ENCODE measurements at regions of chr6 and their contacts with region 1.

Region 1: GRCh38 chr6:169789982-169790927 is 38.8 kb downstream of the ERMARD start:
- DNase-seq: peak; percentile 75
- ATAC-seq: peak; percentile 97
- H3K4me3 Mint-ChIP-seq: peak overlapping the region; percentile 70
- H3K27ac Mint-ChIP-seq: no peak overlapping the region
- H3K4me1 Mint-ChIP-seq: peaks cover 11% of the 10 kb centered on the region
- H3K27me3 Mint-ChIP-seq: peaks cover 41% of the 10 kb centered on the region
- CTCF ChIP-seq: peak; percentile 97

Region 2: DNA sequence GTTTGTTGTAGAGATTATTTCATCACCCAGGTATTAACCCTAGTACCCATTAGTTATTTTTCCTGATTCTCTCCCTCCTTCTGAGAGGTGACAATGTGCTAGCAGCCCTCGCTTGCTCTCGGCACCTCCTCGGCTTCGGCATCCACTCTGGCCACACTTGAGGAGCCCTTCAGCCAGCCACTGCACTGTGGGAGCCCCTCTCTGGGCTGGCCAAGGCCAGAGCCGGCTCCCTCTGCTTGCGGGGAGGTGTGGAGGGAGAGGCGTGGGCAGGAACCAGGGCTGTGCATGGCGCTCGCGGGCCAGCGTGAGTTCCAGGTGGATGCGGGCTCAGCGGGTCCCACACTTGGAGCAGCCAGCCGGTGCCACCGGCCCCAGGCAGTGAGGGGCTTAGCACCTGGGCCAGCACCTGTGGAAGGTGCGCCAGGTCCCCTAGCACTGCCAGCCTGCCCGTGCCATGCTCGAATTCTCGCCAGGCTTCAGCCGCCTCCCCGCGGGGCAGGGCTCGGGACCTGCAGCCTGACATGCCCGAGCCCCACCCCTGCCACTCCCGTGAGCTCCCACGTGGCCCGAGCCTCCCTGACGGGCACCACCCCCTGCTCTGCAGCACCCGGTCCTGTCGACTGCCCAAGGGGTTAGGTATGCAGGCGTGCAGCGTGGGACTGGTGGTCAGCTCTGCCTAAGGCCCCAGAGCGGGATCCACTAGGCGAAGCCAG is 310.3 kb before region 1 on chr6:
- CTCF ChIA-PET with region 1: no interaction called
- POLR2A ChIA-PET with region 1: no interaction called
- intact Hi-C with region 1: no loop called
- DNase-seq: no peak
- ATAC-seq: no peak
- H3K4me3 Mint-ChIP-seq: no peak overlapping the region
- H3K27ac Mint-ChIP-seq: no peak overlapping the region
- H3K4me1 Mint-ChIP-seq: no peaks in the 10 kb centered on the region
- H3K27me3 Mint-ChIP-seq: no peaks in the 10 kb centered on the region
- CTCF ChIP-seq: no peak

Region 3: DNA sequence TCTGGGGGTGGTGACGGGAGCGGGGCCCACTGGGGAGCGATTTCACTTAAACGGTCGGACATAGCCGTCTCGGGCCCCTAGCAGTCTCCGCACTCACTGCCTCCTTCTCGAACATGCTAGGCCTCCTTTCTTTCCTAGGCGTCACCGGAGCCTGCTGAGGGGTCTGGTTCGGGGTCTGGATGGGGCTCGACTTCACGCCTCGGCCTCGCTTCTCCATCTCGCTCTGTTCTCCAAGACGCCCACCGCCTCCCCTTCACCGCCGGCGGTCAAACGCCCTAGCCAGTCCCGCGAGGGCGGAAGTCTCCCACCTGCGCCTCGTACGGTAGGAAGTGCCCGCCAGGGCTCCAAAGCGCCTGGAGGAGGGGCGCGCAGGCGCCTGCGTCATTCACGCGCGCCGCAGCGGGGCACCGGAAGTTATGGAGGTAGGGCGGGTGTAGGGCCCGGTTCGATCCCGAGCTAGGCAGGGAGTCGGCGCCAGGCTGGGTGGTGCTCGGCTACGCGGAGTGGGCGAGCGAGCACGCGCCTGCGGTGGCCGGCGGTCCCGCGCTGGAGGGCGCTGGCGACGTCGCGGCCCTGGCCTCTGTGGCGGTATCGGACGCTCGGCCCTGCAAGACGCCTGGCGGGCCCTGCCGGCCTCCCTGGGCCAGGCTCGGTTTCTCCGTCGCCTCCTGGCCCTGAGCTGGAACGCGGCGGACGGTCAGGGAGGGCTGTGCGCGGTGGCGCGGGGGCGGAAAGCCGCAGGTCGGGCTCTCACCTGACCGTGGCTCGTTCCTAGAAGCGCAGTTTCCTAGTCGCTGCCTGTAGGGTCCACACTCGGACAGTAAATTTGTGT is 38.8 kb before region 1 on chr6 and contains the starts of genes DYNLT2 and ERMARD:
- CTCF ChIA-PET with region 1: interaction called, 11 read pairs
- POLR2A ChIA-PET with region 1: no interaction called
- intact Hi-C with region 1: no loop called
- DNase-seq: peak; percentile 94
- ATAC-seq: peak; percentile 97
- H3K4me3 Mint-ChIP-seq: peak within 1 kb of the TSS; percentile 100
- H3K27ac Mint-ChIP-seq: peak within 1 kb of the TSS; percentile 100
- H3K4me1 Mint-ChIP-seq: peaks cover 28% of the 10 kb centered on the region
- H3K27me3 Mint-ChIP-seq: no peaks in the 10 kb centered on the region
- CTCF ChIP-seq: no peak
- total RNA-seq, gene DYNLT2: 2.2 to 2.4 TPM
- total RNA-seq, gene ERMARD: 24.9 to 26.6 TPM

Region 4: GRCh38 chr6:169778646-169779045 is 11.6 kb before region 1 on chr6:
- CTCF ChIA-PET with region 1: interaction called, 14 read pairs
- POLR2A ChIA-PET with region 1: interaction called, 3 read pairs
- intact Hi-C with region 1: no loop called
- DNase-seq: no peak
- ATAC-seq: no peak
- H3K4me3 Mint-ChIP-seq: no peak overlapping the region
- H3K27ac Mint-ChIP-seq: no peak overlapping the region
- H3K4me1 Mint-ChIP-seq: no peaks in the 10 kb centered on the region
- H3K27me3 Mint-ChIP-seq: no peaks in the 10 kb centered on the region
- CTCF ChIP-seq: no peak

Region 5: DNA sequence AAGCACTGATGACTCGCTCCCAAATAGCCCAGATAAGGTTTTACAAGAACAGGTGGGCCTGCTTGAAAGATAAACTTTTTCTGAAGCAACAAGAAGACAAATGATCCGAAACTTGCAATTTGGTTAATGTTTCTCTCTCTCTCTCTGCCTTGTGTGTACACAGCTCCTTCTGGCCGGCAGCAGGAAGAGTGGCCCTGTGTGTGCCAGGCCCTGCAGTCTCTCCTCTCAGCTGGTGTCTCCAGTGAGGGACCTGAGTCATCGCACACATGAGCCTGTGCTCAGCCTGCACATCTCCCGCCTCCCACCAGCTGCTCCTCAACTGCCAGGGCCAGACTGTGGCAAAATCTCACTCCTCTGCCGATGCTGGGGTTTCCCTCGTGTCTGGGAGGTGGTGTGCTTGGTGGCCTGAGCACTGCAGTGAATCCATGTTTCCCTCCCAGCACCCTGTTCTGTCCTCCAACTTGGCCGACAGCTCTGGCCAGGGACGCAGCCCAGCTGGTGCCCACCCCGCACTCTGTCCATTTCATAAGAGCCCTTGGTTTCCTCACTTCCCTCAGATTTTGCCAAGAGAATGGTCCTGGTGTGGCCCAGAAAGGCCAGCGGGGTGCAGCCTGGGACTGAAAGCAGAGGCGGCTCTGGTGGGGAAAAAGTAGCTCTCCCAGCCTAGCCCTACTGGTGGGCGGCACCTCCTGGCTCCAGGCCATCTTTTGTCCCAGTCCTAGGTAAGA is 10.6 kb after region 1 on chr6:
- CTCF ChIA-PET with region 1: interaction called, 65 read pairs
- POLR2A ChIA-PET with region 1: interaction called, 4 read pairs
- intact Hi-C with region 1: no loop called
- DNase-seq: no peak
- ATAC-seq: peak; percentile 45
- H3K4me3 Mint-ChIP-seq: no peak overlapping the region
- H3K27ac Mint-ChIP-seq: no peak overlapping the region
- H3K4me1 Mint-ChIP-seq: peaks cover 35% of the 10 kb centered on the region
- H3K27me3 Mint-ChIP-seq: peaks cover 42% of the 10 kb centered on the region
- CTCF ChIP-seq: no peak

Region 6: DNA sequence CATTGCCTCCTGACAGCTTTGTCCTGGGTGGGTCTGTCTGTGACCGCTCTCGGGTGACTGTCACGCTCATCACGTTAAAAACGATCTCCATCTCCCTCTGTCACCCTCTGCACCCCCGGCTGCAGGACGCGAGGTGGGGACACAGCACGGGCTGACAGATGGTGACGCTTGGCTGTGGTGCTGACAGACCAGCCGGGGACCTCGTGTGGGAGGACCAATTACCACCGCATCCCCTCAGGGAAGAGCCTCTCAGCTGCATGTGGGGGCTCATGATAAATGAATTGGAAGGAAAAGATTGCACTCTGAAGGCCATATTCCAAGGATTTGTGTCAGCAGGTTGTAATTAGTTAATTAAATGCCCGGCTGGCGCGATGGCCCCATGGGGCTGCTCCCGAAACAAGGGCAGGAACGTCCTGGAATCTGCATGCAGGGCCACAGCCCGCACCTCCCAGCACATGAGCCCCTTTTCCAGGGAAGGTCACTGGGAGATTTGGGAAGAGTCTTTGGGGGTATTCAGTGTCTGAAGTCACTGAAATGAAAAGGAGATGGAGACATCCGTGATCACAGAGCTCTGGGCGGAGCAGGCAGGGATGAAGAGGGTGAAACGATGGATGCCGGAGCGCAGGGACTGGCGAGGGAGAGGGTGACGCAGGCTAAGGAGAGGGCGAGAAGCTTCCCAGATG is 48.2 kb after region 1 on chr6:
- CTCF ChIA-PET with region 1: interaction called, 13 read pairs
- POLR2A ChIA-PET with region 1: no interaction called
- intact Hi-C with region 1: no loop called
- DNase-seq: no peak
- ATAC-seq: no peak
- H3K4me3 Mint-ChIP-seq: no peak overlapping the region
- H3K27ac Mint-ChIP-seq: no peak overlapping the region
- H3K4me1 Mint-ChIP-seq: no peaks in the 10 kb centered on the region
- H3K27me3 Mint-ChIP-seq: peaks cover 5% of the 10 kb centered on the region
- CTCF ChIP-seq: no peak

Region 7: DNA sequence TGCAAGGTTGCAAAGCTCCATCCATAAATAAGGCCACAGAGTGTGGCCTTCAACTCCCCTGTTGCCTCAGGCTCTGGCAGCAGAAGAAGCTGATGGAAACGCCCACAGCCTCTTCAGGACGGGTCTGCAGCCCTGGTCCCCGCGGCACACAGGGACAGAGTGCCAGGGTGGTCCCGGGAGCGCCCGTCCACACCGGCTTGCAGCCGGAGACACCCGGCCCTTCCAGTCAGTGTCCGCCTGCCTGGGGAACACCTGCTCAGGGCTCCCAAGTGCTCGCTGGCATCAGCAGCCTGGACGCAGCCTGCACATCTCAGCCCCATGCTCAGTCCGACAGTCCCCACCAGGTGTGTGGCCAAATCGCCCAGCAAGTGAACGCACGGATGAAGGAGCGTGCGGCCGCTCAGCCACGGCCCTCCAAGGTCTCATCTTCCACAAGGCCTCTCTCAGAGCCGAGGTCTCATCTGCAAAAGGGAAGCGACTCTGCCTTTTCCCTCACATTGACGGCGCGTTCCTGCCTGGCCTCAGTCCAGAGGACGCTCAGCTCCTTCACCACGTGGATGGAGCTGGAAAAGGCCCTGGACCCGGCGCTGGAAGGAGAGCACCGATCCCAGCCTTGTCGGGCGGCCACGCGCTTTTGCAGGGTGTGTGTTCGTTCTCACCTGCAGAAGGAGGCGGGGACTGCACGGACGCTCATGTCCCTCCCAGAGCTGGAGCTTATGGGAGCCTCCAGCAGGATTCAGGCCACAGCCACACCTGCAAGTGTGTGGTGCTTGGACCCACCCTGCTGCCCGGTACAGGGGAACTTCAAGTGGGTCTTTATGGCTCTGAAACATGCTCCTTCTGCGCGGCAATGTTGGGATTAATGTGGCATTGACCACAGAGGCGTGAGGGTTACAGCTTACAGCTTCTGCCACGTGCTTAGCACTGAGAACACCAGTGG is 320.2 kb after region 1 on chr6:
- CTCF ChIA-PET with region 1: no interaction called
- POLR2A ChIA-PET with region 1: no interaction called
- intact Hi-C with region 1: no loop called
- DNase-seq: no peak
- ATAC-seq: no peak
- H3K4me3 Mint-ChIP-seq: no peak overlapping the region
- H3K27ac Mint-ChIP-seq: no peak overlapping the region
- H3K4me1 Mint-ChIP-seq: no peaks in the 10 kb centered on the region
- H3K27me3 Mint-ChIP-seq: peaks cover 5% of the 10 kb centered on the region
- CTCF ChIP-seq: no peak

Region 8: DNA sequence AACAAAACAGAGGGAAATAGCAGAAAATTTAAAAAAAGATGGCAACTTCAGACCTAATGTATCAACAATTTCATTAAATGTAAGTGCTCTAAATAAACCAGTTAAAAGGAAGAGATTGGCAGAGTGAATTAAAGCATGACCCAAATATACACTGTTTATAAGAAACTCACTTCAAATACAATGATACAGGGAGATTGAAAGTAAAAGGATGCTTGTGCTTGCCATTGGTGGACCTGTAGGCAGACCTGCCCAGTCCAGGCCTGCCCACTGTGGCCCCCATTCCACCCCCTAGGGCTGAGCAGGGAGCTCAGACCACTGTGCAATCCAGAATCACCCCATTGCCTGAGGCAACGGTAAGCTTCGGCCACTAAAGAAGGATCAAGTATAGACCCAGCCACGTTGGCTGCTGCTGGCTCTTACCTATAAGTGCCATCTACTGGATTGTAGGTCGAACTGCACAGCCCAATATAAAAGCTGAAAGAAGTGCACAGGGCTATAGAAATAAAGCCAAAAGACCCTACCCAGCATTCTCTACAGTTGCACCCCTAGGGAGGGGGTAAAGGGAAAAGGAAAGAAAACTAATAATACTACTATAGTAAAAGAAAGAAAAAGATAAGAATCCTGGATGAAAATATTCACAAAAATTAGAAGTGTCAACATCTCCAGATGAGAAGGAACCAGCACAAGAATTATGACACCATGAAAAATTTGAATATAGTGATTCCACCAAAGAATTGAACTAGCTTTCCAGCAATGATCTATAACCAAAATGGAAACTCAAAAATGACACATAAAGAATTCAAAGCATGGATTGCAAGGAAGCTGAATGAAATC is 726.7 kb after region 1 on chr6:
- CTCF ChIA-PET with region 1: interaction called, 32 read pairs
- POLR2A ChIA-PET with region 1: no interaction called
- intact Hi-C with region 1: loop called (anchors 10 kb)
- DNase-seq: peak; percentile 62
- ATAC-seq: peak; percentile 99
- H3K4me3 Mint-ChIP-seq: no peak overlapping the region
- H3K27ac Mint-ChIP-seq: no peak overlapping the region
- H3K4me1 Mint-ChIP-seq: no peaks in the 10 kb centered on the region
- H3K27me3 Mint-ChIP-seq: peaks cover 10% of the 10 kb centered on the region
- CTCF ChIP-seq: peak; percentile 84

Region 9: GRCh38 chr6:170529839-170530469 is 739.7 kb after region 1 on chr6:
- CTCF ChIA-PET with region 1: interaction called, 32 read pairs
- POLR2A ChIA-PET with region 1: interaction called, 3 read pairs
- intact Hi-C with region 1: no loop called
- DNase-seq: peak; percentile 83
- ATAC-seq: peak; percentile 77
- H3K4me3 Mint-ChIP-seq: no peak overlapping the region
- H3K27ac Mint-ChIP-seq: no peak overlapping the region
- H3K4me1 Mint-ChIP-seq: peaks cover 7% of the 10 kb centered on the region
- H3K27me3 Mint-ChIP-seq: no peaks in the 10 kb centered on the region
- CTCF ChIP-seq: peak; percentile 83

Measured in activated CD8-positive, alpha-beta T cell treated with anti-CD3 and anti-CD28 coated beads for 36 hours (primary cell).